CD8-positive, alpha-beta T cell (primary cell): ENCODE measurements at regions of chr15 and their contacts with region 1.

Region 1: DNA sequence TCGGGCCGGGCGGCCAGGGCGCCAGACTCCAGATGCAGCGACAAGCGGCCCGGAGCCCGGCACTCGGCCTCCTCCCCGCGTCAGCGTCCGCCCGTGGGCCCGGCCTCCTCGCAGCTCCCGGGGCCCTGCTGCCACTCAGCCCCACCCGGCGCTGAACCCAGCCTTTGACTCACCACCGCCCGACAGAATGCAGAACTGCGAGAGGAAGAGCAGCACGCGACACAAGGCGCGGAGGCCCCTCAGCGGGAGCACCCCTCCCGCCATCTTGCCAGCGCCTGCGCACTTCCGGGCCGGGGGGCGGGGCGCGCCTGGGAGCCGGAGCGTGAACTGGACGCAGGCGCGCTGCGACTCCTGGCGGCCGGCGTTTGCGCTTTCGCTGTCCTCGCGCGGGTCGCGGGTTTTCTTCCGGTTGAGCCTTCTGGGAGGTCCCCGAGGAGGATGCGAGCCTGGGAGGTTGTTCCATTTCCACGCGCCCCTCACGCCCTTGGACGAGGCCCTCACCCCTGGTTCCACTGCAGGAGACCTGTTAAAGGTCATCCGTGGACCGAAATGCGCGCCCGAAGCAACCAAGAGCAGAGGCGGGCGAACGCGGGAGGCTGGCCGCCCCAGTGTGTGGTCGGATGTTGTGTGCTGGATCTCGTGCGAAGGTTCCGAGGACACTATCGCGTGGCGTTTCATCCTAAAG is at the start of gene TM2D3:
- DNase-seq: peak; percentile 89 to 98 (median 95)
- ATAC-seq: peak; percentile 92
- H3K4me3 ChIP-seq: peak within 1 kb of the TSS; percentile 91 to 99
- H3K4me3 Mint-ChIP-seq: peak within 1 kb of the TSS; percentile 90
- H3K27ac ChIP-seq: peak within 1 kb of the TSS; percentile 97
- H3K27ac Mint-ChIP-seq: peak within 1 kb of the TSS; percentile 96
- H3K4me1 ChIP-seq: peaks cover 26% of the 10 kb centered on the region
- H3K4me1 Mint-ChIP-seq: peaks cover 39% of the 10 kb centered on the region
- H3K27me3 ChIP-seq: no peaks in the 10 kb centered on the region
- H3K27me3 Mint-ChIP-seq: no peaks in the 10 kb centered on the region
- CTCF ChIP-seq: peak; percentile 76
- total RNA-seq, gene TM2D3: 76.1 to 76.7 TPM

Region 2: GRCh38 chr15:100602064-100602822 is 1050.0 kb before region 1 on chr15 and contains the starts of genes ASB7 and LINS1:
- CTCF ChIA-PET with region 1: no interaction called
- POLR2A ChIA-PET with region 1: no interaction called
- intact Hi-C with region 1: loop called (anchors 2 to 5 kb)
- DNase-seq: peak; percentile 99 to 100 (median 100)
- ATAC-seq: peak; percentile 89
- H3K4me3 ChIP-seq: peak within 1 kb of the TSS; percentile 90 to 95
- H3K4me3 Mint-ChIP-seq: no peak within 1 kb of the TSS
- H3K27ac ChIP-seq: peak within 1 kb of the TSS; percentile 71 to 94
- H3K27ac Mint-ChIP-seq: peak within 1 kb of the TSS; percentile 93
- H3K4me1 ChIP-seq: peaks cover 58% of the 10 kb centered on the region
- H3K4me1 Mint-ChIP-seq: peaks cover 64% of the 10 kb centered on the region
- H3K27me3 ChIP-seq: no peaks in the 10 kb centered on the region
- H3K27me3 Mint-ChIP-seq: no peaks in the 10 kb centered on the region
- CTCF ChIP-seq: no peak
- total RNA-seq, gene ASB7: 17.2 to 19.9 TPM
- total RNA-seq, gene LINS1: 42.8 to 45.9 TPM

Region 3: GRCh38 chr15:101277038-101277882 is 375.0 kb before region 1 on chr15 and contains the start of gene SELENOS:
- CTCF ChIA-PET with region 1: no interaction called
- POLR2A ChIA-PET with region 1: no interaction called
- intact Hi-C with region 1: loop called in 1 of 2 experiments (anchors 1 kb)
- DNase-seq: peak; percentile 62 to 94 (median 88)
- ATAC-seq: peak; percentile 93
- H3K4me3 ChIP-seq: peak within 1 kb of the TSS; percentile 75 to 77
- H3K4me3 Mint-ChIP-seq: peak within 1 kb of the TSS; percentile 95
- H3K27ac ChIP-seq: peak within 1 kb of the TSS; percentile 65 to 77
- H3K27ac Mint-ChIP-seq: peak within 1 kb of the TSS; percentile 93
- H3K4me1 ChIP-seq: peaks cover 16% of the 10 kb centered on the region
- H3K4me1 Mint-ChIP-seq: peaks cover 24% of the 10 kb centered on the region
- H3K27me3 ChIP-seq: no peaks in the 10 kb centered on the region
- H3K27me3 Mint-ChIP-seq: no peaks in the 10 kb centered on the region
- CTCF ChIP-seq: no peak
- total RNA-seq, gene SELENOS: 46.0 to 50.4 TPM

Region 4: DNA sequence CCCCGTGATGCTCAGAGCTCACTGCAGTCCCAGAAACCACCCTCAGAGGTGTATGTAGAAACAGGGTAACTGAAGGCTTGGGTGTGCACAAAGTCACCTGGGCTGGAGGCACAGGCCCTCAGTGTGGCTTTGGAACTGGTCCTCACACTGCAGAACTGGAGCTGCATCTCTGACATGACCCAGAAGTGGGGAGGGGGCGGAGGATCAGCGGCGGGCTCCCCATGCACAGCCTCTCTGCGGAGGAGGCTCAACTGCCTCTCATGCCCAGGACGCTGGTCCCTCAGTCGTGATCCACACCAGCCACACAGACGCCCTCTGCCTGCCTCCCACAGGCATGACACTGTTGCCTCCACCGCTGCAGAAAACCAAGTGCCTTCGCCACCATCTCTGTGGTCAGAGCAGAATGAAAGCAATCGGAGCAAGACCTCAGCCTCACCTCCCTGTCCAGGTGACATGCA is 73.8 kb before region 1 on chr15:
- CTCF ChIA-PET with region 1: no interaction called
- POLR2A ChIA-PET with region 1: no interaction called
- intact Hi-C with region 1: no loop called
- DNase-seq: peak in 2 of 9 experiments; percentile 13 to 16
- ATAC-seq: no peak
- H3K4me3 ChIP-seq: no peak overlapping the region
- H3K4me3 Mint-ChIP-seq: no peak overlapping the region
- H3K27ac ChIP-seq: no peak overlapping the region
- H3K27ac Mint-ChIP-seq: no peak overlapping the region
- H3K4me1 ChIP-seq: no peaks in the 10 kb centered on the region
- H3K4me1 Mint-ChIP-seq: no peaks in the 10 kb centered on the region
- H3K27me3 ChIP-seq: peaks cover 0 to 4% of the 10 kb centered on the region in 2 experiments
- H3K27me3 Mint-ChIP-seq: peaks cover 50% of the 10 kb centered on the region
- CTCF ChIP-seq: no peak

Region 5: DNA sequence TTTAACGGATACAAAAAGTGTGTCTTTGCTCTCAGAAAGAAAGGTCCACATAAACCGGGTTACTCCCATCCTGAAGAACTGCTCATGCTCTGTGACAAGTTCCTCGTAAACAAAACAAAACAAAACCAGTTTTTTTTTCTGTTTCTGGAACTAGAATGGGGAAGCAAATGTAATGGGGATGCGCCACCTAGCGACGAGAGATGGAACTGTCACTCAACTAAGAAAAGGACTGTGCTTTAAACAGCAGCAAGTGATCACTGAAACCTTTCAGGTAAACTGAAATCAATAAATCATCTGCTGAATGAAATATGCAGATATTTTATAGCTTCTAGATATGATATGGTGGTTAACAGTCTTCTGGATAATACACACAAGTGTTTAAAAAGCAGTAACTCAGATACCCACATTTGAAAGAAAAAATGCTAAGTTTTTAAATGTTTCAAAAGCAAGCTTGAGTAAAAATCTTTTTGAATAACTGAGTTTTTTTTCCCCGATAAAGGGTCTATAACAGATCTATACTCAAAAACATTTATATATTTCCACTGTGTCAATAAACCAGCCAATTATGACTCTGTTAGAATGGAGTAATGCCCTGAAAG is 11.0 kb before region 1 on chr15:
- CTCF ChIA-PET with region 1: interaction called, 18 read pairs
- POLR2A ChIA-PET with region 1: interaction called, 4 read pairs
- intact Hi-C with region 1: loop called (anchors 1 kb)
- DNase-seq: peak; percentile 53 to 85 (median 75)
- ATAC-seq: peak; percentile 81
- H3K4me3 ChIP-seq: no peak overlapping the region
- H3K4me3 Mint-ChIP-seq: no peak overlapping the region
- H3K27ac ChIP-seq: peak overlapping the region in 1 of 2 experiments; percentile 59
- H3K27ac Mint-ChIP-seq: peak overlapping the region; percentile 89
- H3K4me1 ChIP-seq: peaks cover 13% of the 10 kb centered on the region
- H3K4me1 Mint-ChIP-seq: peaks cover 26% of the 10 kb centered on the region
- H3K27me3 ChIP-seq: no peaks in the 10 kb centered on the region
- H3K27me3 Mint-ChIP-seq: no peaks in the 10 kb centered on the region
- CTCF ChIP-seq: peak; percentile 99